Naive thymus-derived CD8-positive, alpha-beta T cell (primary cell): ENCODE measurements at regions of chr2 and their contacts with region 1.

Region 1: DNA sequence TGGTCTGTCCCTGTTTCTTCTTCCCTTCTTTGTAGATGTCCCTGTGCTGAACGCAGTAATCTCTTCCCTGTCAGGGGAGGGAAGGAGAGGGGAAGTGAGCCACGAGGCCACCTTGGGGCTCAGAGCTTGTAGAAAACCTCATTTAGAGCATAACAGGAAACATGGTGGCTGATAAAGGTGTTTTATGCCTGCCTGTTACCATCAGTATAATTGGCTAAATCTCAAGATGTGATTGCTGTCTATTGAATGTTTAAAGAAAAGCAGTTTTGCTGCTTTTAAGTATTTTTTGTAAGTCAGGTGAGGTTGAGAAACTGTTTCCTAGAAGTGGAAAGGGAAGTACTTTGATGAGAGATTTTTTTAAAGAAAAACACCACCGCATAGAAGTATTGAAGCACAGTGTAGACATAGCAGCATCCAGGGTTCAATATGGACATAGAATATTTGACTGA is 59.7 kb upstream of the PDK1 start:
- DNase-seq: peak in 9 of 10 donors; percentile 37 to 84 (median 62)
- ATAC-seq: peak; percentile 92 to 96
- H3K4me3 Mint-ChIP-seq: peak overlapping the region; percentile 55 to 86 (median 83)
- H3K27ac Mint-ChIP-seq: peak overlapping the region; percentile 82 to 100 (median 96)
- H3K4me1 Mint-ChIP-seq: peaks cover 41 to 86% (median 78%) of the 10 kb centered on the region in 4 donors
- H3K27me3 Mint-ChIP-seq: no peaks in the 10 kb centered on the region

Region 2: DNA sequence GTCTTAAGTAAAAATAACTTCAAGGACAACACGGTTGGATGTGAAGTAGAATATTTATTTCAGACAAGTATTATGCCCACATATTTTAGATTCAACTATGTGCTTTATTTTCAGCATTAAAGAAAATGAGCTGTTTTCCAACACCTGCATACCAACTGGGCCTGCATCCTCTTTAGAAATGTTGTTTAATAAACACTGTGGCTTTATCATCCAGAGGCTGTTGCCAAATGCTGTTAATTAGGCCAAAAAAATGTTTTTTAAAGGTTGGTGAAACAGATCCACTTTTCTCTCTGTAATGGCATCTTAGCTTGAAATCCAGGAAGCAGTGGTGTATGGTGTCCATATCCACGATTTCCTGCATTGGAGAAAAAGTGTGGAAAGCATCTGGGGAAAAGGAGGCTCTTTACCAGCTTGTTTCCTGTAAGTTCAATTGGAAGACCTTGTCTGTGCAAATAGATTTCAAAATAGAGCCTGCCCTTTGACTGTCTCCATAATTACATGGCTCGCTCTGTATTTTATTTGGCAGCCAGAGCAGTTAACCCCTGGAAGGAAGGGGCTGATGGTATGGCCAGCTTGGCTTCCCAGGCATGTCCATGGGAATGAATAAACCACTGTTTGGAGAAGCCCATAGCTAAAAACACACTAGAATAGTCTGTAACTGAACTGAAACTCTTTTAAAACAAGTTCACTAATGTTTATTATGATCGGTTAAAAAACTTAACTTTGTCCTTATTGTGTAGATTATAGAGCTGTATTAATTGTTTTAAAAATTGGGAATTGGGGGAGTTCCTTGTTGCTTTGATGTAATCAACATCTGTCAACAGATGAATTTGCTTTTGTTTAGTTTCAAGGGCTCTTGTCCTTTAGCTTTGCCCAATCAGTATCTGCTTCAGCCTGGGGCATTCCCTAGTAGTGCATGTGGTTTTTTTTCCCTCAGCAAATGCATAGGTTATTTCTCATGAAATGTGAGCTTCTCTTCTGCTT is 443.9 kb before region 1 on chr2:
- POLR2A ChIA-PET with region 1: no interaction called
- DNase-seq: no peak
- ATAC-seq: no peak
- H3K4me3 Mint-ChIP-seq: no peak overlapping the region
- H3K27ac Mint-ChIP-seq: no peak overlapping the region
- H3K4me1 Mint-ChIP-seq: no peaks in the 10 kb centered on the region
- H3K27me3 Mint-ChIP-seq: no peaks in the 10 kb centered on the region

Region 3: GRCh38 chr2:172484253-172484652 is 11.9 kb before region 1 on chr2:
- POLR2A ChIA-PET with region 1: interaction called, 36 read pairs
- DNase-seq: peak in 4 of 10 donors; percentile 26 to 61 (median 54)
- ATAC-seq: peak; percentile 58 to 65
- H3K4me3 Mint-ChIP-seq: peak overlapping the region in 8 of 10 donors; percentile 5 to 65 (median 44)
- H3K27ac Mint-ChIP-seq: peak overlapping the region; percentile 74 to 88 (median 80)
- H3K4me1 Mint-ChIP-seq: peaks cover 41 to 81% (median 72%) of the 10 kb centered on the region in 4 donors
- H3K27me3 Mint-ChIP-seq: no peaks in the 10 kb centered on the region

Region 4: GRCh38 chr2:172525606-172526005 is 29.4 kb after region 1 on chr2:
- POLR2A ChIA-PET with region 1: no interaction called
- DNase-seq: no peak
- ATAC-seq: no peak
- H3K4me3 Mint-ChIP-seq: no peak overlapping the region
- H3K27ac Mint-ChIP-seq: no peak overlapping the region
- H3K4me1 Mint-ChIP-seq: peaks cover 0 to 10% (median 5%) of the 10 kb centered on the region in 4 donors
- H3K27me3 Mint-ChIP-seq: no peaks in the 10 kb centered on the region

Region 5: GRCh38 chr2:172540421-172540820 is 44.2 kb after region 1 on chr2:
- POLR2A ChIA-PET with region 1: no interaction called
- DNase-seq: no peak
- ATAC-seq: no peak
- H3K4me3 Mint-ChIP-seq: no peak overlapping the region
- H3K27ac Mint-ChIP-seq: no peak overlapping the region
- H3K4me1 Mint-ChIP-seq: peaks cover 2 to 18% (median 8%) of the 10 kb centered on the region in 4 donors
- H3K27me3 Mint-ChIP-seq: no peaks in the 10 kb centered on the region

Region 6: GRCh38 chr2:172555522-172556283 is 59.5 kb after region 1 on chr2 and contains the start of gene PDK1:
- POLR2A ChIA-PET with region 1: interaction called, 46 read pairs
- DNase-seq: peak; percentile 86 to 94 (median 92)
- ATAC-seq: peak; percentile 90 to 93
- H3K4me3 Mint-ChIP-seq: peak within 1 kb of the TSS; percentile 92 to 98 (median 97)
- H3K27ac Mint-ChIP-seq: peak within 1 kb of the TSS; percentile 67 to 97 (median 95)
- H3K4me1 Mint-ChIP-seq: peaks cover 23 to 63% (median 56%) of the 10 kb centered on the region in 4 donors
- H3K27me3 Mint-ChIP-seq: peaks cover 0 to 1% (median 0%) of the 10 kb centered on the region in 5 donors
- polyA plus RNA-seq, gene PDK1: 37.1 to 64.4 (median 63.7) TPM

Region 7: GRCh38 chr2:172578860-172579512 is 82.8 kb after region 1 on chr2:
- POLR2A ChIA-PET with region 1: no interaction called
- DNase-seq: no peak
- ATAC-seq: no peak
- H3K4me3 Mint-ChIP-seq: peak overlapping the region in 2 of 10 donors; percentile 1 to 36
- H3K27ac Mint-ChIP-seq: peak overlapping the region in 2 of 10 donors; percentile 25 to 63
- H3K4me1 Mint-ChIP-seq: peaks cover 13 to 35% (median 26%) of the 10 kb centered on the region in 4 donors
- H3K27me3 Mint-ChIP-seq: no peaks in the 10 kb centered on the region